Ascending aorta (tissue), 2 donors: ENCODE measurements at regions of chr13 and their contacts with region 1.

Region 1: DNA sequence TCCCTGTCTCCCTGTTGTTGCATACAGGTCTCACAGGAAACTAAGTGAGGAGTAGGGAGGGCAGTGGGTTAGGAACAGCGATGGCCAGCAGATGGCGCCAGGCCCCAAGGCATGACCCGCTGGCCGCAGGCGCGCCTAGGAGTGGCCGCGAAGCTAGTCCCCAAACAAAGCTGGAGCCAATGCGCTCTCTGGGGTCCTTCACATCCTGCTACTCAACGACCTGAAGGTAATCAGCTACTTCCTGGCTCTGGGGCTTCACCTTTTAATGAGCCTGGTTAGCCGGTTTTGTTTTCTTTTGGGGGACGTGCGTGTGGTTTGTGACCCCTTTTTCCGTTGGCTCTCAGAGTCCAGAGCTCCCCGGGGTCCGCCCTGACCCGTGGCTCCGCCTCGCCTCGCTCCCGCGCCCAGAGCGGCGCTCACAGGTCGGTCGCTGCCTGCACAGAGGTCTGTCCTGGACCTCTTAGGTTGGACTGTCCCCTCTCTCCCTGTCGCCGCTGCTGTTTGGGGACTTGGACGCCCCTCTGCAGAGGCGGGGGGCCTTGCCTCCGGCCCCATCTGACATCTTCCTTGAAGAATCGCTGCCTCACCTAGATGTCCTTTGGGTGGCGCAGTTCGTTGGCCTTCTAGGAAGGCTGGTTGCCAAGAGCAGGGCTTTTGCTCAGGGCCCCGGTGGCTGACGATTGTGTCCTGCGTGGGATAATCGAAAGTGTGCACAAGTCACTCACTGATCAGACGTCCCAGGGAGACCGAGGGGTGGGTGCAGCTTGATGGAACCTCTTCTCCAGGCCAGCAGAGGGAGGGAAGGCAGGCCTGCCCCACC is 62.1 kb upstream of the GTF3A start:
- DNase-seq: peak; percentile 24 to 89
- H3K4me3 ChIP-seq: peak overlapping the region; percentile 58 to 60
- H3K27ac ChIP-seq: no peak overlapping the region
- H3K4me1 ChIP-seq: peaks cover 0 to 6% of the 10 kb centered on the region in 2 donors
- H3K27me3 ChIP-seq: no peaks in the 10 kb centered on the region
- CTCF ChIP-seq: peak; percentile 79 to 94 (median 88)

Region 2: DNA sequence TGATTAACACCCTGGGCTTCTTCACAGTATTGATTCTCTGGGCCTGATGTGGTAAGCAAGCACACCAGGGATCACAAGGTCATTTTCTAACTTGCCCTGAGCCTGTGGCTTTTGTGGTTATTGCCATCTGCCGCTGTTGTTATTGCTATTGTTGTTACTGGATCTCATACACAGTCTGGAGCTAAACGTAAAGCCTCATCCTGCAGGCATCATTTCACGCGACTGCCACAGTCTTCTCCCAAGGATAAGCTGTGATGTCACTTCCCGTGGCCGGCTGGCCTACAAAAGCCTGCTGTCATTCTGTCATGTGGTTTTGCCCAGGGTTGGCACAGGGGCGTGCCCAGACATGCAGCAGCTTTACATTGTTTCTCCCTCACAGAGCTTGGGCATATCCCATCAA is 447.6 kb before region 1 on chr13:
- intact Hi-C with region 1: no loop called
- DNase-seq: no peak
- H3K4me3 ChIP-seq: no peak overlapping the region
- H3K27ac ChIP-seq: no peak overlapping the region
- H3K4me1 ChIP-seq: no peaks in the 10 kb centered on the region
- H3K27me3 ChIP-seq: no peaks in the 10 kb centered on the region
- CTCF ChIP-seq: no peak

Region 3: DNA sequence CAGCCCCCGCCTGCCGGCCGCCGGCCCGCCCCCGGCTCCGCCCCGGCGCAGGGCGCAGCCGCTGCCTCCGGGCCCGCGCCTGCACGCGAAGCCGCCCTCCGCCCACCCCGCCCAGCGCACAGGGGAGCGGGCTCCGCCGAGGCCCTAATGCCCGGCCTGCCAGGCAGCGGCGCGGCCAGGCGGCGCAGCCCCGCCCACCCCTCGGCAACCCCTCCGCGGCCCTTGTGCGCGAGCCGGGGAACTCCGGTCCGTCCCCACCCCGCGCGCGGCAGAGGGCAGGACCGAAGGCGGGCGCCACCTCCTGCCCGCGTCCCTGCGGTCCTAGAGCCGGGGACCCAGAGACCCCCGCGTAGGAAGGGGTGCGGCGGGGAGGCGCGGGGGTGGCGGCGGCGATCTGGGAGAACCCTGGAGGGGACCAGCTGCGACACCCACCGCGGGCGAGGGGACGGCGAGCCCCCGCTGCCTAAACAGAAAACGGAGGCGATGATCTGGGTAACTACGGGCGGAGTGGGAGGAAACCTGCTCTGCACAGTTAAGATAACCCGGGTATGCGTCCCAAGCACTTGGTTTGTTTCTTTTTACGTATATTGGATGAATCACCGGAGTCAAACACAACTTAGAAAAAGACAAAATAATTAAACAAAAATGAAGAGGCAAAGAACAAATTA is 190.3 kb before region 1 on chr13:
- intact Hi-C with region 1: loop called (anchors 5 kb)
- DNase-seq: peak; percentile 66 to 97
- H3K4me3 ChIP-seq: peak overlapping the region; percentile 86 to 90
- H3K27ac ChIP-seq: peak overlapping the region; percentile 89 to 99
- H3K4me1 ChIP-seq: peaks cover 9 to 22% of the 10 kb centered on the region in 2 donors
- H3K27me3 ChIP-seq: no peaks in the 10 kb centered on the region
- CTCF ChIP-seq: peak in 1 of 3 experiments; percentile 22

Region 4: DNA sequence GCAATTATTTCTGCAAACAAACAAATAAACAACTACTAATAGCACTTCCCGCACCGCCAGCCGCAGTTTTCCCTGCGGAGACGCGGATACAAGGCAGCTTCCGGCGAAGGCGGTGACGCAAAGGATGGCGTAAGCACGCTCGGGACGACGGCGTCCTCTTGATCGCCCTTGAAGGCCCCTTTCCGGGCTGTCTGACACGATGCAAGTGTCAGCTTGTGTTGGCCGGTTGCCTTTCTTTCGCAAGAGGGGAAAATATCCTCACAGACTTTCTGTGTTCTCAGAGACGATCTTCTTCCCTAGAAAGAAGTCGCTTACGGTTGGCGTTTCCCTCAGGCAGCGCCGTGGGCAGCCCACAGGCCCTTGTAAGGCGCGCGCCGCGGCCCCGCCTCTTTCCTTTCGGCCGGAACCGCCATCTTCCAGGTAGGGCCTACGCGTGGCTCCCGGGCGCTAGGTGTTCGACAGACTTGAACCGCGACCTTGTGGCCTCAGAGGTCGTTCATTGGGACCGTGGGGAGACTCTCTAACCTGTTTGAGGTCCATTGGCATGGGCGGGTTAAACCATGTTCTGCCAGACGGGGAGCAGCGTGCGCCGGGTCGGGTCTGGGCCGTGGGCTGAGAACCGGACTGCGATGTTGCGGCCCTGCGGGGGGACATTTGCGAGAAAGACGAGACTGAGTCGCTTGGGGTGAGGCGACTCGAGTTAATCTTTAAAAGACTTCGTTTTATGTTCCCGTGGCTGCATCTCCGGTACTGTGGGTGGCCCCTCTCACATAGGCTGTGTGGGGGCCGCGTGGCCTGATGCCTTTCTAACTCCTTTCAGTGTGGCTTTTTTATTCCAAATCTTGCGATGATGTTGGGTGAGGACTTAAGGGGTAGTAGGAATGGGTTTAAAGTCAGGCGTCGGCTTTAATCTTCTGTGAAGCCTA is 110.8 kb before region 1 on chr13 and contains the start of gene RPL21:
- intact Hi-C with region 1: loop called (anchors 5 kb)
- DNase-seq: peak; percentile 81 to 98
- H3K4me3 ChIP-seq: peak within 1 kb of the TSS; percentile 82 to 93
- H3K27ac ChIP-seq: peak within 1 kb of the TSS; percentile 91 to 97
- H3K4me1 ChIP-seq: peaks cover 5 to 17% of the 10 kb centered on the region in 2 donors
- H3K27me3 ChIP-seq: no peaks in the 10 kb centered on the region
- CTCF ChIP-seq: no peak
- total RNA-seq, gene RPL21: 377 TPM

Region 5: GRCh38 chr13:27281420-27281819 is 80.9 kb before region 1 on chr13:
- intact Hi-C with region 1: no loop called
- DNase-seq: no peak
- H3K4me3 ChIP-seq: no peak overlapping the region
- H3K27ac ChIP-seq: no peak overlapping the region
- H3K4me1 ChIP-seq: no peaks in the 10 kb centered on the region
- H3K27me3 ChIP-seq: no peaks in the 10 kb centered on the region
- CTCF ChIP-seq: no peak

Region 6: GRCh38 chr13:27644302-27644701 is 282.0 kb after region 1 on chr13:
- intact Hi-C with region 1: no loop called
- DNase-seq: no peak
- H3K4me3 ChIP-seq: no peak overlapping the region
- H3K27ac ChIP-seq: no peak overlapping the region
- H3K4me1 ChIP-seq: no peaks in the 10 kb centered on the region
- H3K27me3 ChIP-seq: no peaks in the 10 kb centered on the region
- CTCF ChIP-seq: no peak

Region 7: DNA sequence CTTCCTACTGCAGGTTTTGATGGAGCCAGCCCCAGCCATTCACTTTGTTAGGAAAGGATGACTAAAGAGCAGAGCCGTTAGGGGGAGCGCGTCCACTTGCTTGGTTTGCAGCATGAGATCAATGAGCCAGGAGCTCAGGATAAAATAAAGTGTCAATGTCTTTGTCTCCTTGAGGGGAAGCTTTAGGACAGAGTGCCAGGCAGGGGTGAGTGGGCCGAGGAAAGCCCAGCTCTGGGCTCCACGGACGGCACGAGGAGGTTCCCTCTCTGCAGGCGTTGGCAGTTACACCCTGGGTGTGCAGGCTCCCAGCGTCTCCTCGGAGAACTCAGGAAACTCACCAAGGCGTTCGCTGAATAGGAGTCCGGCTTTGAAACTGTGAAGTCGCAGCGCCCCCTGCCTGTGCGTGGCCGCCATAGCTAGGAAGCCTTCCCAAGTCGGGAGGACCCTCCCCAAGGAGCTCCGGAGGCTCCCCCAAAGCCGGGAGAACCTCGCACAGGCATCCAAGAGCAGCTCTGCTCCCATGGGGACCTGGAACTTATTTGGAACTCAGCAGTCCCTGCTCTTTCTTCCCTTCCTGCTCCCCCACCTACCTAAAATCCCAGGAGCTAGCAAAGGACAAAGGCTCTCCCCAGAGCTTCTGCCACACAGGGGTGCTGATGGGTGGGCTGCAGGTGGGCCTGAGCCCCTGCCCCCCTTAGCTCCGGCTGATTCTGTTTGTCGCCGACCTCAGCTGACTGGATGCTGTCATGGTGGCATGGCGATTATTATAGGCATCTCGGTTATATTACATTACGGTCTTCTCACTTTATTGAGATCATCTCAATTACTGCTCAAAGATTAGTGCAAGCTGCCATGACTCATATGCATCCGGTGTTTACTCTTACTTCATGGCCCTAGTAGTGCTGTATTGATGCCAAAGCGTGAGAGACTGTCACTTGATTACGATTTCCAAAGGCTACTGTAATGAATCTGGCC is 464.4 kb after region 1 on chr13:
- intact Hi-C with region 1: loop called (anchors 1 kb)
- DNase-seq: peak in 1 of 2 donors; percentile 87
- H3K4me3 ChIP-seq: peak overlapping the region in 1 of 2 donors; percentile 51
- H3K27ac ChIP-seq: no peak overlapping the region
- H3K4me1 ChIP-seq: peaks cover 0 to 5% of the 10 kb centered on the region in 2 donors
- H3K27me3 ChIP-seq: no peaks in the 10 kb centered on the region
- CTCF ChIP-seq: peak; percentile 77 to 92 (median 87)